ENCODE measurements at regions of chr9 and their contacts with region 1.

Region 1: GRCh38 chr9:3863111-3863528 is 337.3 kb upstream of the RFX3 start:
- DNase-seq: peak in 4 of 10 donors; percentile 18 to 81 (median 52)

Region 2: DNA sequence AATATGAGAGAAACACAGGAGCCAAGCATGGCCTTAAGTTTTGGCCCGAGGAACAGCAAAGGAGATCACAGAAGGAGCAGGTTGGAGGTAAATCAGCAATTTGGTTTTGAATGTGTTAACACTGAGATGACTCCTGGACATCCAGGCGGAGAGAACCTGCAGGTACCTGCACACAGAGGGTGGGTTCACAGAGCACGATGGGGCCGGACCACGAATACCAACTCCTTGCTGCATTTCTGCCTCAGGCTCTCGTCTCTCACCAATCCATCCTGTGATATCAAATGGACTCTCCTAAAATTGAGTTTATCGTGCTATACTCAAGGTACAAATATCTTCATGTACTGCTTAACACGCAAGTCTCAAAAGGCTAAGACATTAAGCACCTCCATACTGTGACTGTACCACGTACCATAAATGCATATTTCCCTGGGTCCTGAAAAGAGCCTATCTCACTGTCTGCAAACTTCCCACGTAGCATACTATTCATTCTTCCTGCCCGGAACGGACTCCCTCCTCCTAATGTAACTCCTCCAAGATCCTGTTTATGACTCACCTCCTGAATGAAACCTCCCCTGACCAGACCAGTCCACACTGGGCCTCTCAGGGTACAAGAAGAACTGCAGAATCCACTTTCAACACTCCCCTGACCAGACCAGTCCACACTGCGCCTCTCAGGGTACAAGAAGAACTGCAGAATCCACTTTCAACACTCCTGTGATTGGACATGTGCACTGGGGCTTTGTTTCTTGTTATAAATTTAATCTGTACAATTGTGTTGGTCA is 43.5 kb after region 1 on chr9:
- intact Hi-C with region 1: no loop called
- DNase-seq: no peak

Region 3: GRCh38 chr9:3954331-3955304 is 91.5 kb after region 1 on chr9:
- intact Hi-C with region 1: no loop called
- DNase-seq: no peak

Region 4: GRCh38 chr9:3971391-3972082 is 108.4 kb after region 1 on chr9:
- intact Hi-C with region 1: loop called (anchors 10 kb)
- DNase-seq: no peak